ENCODE measurements at regions of chr9 and their contacts with region 1.

Region 1: DNA sequence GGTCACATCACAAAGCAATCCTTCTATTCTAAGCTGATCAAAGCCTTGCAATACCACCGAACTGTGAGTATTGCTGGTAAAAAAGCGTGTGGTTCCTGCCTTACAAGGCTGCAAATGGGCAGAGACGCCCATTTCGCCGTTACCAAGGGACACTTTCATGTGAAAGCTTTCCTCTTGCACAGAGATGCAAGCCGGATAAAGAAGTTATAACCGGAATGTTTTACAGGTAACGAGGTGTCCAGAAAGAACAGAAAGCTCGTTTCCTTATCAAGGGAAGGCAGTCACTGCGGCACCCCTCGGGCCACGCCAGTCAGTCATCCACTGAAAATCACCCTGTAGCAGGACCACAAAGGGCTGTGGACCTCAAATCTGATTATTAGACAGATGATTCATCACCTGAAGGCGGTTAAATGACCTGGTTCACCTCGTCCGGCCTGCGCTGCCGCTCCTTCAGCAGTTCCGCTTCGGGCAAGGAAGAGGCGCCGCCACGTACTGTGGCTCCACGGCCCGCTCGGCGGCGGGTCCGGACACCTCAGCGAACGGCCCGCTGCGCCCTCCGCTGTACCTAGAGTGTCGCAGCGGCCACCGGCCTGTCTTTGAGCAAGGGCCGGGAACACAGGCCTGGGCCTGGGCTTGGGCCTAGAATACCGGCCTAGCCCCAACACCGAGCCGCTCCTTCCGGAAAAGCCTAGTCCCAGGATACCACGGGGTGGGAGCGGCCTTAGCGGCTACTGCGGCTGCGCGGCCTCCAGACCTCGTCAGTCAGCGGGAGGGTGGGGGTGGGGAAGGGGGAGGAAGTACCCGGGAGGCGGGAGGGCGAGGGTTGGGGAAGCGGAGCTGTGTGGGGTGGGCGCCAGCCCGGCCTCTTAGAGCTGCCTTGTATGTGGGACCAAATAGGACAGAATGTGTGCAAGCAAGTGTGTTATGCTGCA is at the start of gene KLHL9:
- DNase-seq: peak; percentile 97
- H3K4me3 ChIP-seq: peak within 1 kb of the TSS; percentile 89 to 96
- H3K27ac ChIP-seq: peak within 1 kb of the TSS; percentile 83 to 90
- H3K4me1 ChIP-seq: peaks cover 7 to 28% of the 10 kb centered on the region in 2 experiments; a peak in 3 of 4 replicates
- H3K27me3 ChIP-seq: peaks cover 7% of the 10 kb centered on the region; the same call in 1 of the 2 replicates
- CTCF ChIP-seq: no peak
- EP300 ChIP-seq: peak in 1 of 2 experiments; percentile 24; a peak in 1 of 4 replicates
- RAD21 ChIP-seq: no peak
- polyA plus RNA-seq, gene KLHL9: 6.8 and 8.8 TPM in 2 replicates

Region 2: DNA sequence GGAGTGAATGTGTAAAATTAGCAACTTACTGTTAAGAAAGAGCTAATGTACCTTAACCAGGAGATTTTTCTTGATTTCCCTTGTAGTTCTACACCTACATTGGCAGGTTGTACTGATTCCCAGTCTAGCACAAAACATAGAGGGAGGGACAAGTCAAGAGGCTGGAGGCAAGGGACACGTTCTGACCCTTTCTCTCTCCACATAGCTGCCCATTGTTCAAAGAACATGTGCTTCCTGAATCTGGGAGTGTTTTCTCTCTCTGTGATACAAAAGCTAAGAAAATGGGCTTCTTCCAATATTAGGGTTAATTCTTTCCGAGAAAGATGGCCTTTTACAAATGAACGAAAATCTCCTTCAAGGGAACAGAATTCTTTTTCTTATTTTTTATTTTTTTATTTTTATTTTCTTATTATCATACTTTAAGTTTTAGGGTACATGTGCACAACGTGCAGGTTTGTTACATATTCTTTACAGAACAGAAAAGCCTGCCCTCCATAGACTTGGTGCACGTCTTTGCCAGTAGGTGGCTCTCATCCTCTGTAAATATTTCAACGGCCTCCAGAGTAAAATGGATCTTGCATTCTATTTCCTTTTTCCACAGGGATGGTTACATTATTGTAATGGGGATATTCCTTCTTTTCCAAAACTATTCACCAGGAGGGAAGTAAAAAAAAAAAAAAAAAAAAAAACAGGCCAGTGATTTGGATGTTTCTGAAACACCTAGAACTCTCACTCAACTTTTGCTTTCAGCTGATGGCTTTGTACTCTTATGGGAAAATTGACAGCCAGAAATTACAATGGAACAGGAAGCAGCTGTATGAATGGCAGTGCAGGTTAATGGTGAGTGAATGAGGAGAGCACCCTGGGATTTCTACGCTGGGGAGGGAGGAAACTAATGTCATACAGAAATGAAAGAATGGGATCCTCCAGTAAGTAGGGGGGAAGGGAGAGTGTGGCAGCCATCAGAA is 16.7 kb before region 1 on chr9:
- CTCF ChIA-PET with region 1: interaction called, 19 read pairs
- POLR2A ChIA-PET with region 1: no interaction called
- DNase-seq: peak; percentile 30
- H3K4me3 ChIP-seq: no peak overlapping the region
- H3K27ac ChIP-seq: no peak overlapping the region
- H3K4me1 ChIP-seq: no peaks in the 10 kb centered on the region
- H3K27me3 ChIP-seq: no peaks in the 10 kb centered on the region
- CTCF ChIP-seq: peak; percentile 77
- EP300 ChIP-seq: no peak
- RAD21 ChIP-seq: peak; percentile 75